Mucosa of descending colon (tissue), 3 donors: ENCODE measurements at regions of chr5 and their contacts with region 1.

Region 1: DNA sequence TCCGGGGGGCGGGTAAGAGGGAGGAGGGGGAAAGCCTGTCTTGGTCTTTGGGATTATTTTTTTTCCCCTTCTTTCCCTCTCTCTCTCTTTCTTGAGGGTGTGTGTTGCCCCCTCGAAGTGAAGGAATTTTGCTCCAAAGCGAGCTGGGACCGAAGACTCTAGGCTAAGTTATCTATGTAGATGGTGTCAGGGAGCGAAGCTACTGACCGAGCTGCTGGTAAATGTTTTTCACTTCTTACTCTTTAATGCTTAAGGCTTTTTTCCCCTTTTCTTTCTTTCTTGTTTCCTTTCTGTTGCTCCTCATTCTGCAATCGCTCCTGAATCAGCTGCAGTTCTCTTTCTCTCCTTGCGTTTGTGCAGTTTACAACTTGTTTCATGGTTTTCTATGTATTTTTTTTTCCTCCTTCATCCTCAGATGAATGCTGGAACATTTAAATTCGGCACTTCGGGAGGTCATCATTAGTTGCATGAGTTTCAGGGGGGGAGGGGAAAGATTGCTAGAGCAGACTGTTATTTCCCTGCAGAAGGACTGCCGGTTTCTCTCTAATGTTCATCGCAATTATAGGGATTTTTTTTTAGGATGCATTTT is 1312.0 kb upstream of the WWC1 start:
- DNase-seq: no peak
- ATAC-seq: no peak
- H3K4me3 ChIP-seq: no peak overlapping the region
- H3K4me1 ChIP-seq: no peaks in the 10 kb centered on the region
- CTCF ChIP-seq: no peak

Region 2: GRCh38 chr5:167064198-167064776 is 84.9 kb after region 1 on chr5:
- intact Hi-C with region 1: loop called in 1 of 2 experiments (anchors 5 kb)
- DNase-seq: no peak
- ATAC-seq: no peak
- H3K4me3 ChIP-seq: no peak overlapping the region
- H3K4me1 ChIP-seq: no peaks in the 10 kb centered on the region
- CTCF ChIP-seq: no peak

Region 3: DNA sequence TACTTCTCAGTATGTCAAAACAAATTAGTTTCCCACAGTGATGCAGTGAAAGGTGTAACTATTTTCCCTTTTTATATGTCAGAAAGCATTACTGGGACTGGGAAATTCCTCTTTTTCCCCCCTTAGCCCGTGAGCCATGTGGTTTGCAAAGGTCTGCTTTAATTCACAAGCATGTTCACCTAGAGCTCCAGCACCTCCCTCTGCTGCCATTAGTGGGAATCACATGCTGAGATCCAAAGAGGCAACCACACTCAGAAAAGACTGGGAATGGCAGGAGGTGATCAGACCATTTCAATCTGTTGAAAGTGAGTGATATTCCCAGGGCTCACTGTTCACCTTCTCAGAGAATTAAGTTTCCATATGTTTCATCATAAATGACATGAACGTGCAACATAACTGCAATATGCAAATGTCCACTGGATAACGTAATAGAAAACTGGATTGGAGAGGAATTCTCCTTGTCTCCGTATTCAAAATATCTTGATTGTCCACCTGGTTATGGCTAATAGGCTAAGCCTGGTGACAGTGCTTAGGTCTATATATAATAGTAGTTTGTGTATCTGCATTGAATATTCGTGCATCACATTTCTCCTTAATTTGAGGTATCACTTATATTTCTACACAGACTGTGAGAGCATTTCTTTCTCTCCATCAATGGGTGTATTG is 608.5 kb after region 1 on chr5:
- intact Hi-C with region 1: no loop called
- DNase-seq: peak in 1 of 3 donors; percentile 12
- ATAC-seq: no peak
- H3K4me3 ChIP-seq: no peak overlapping the region
- H3K4me1 ChIP-seq: no peaks in the 10 kb centered on the region
- CTCF ChIP-seq: no peak